B cell (primary cell): ENCODE measurements at regions of chr20 and their contacts with region 1.

Region 1: DNA sequence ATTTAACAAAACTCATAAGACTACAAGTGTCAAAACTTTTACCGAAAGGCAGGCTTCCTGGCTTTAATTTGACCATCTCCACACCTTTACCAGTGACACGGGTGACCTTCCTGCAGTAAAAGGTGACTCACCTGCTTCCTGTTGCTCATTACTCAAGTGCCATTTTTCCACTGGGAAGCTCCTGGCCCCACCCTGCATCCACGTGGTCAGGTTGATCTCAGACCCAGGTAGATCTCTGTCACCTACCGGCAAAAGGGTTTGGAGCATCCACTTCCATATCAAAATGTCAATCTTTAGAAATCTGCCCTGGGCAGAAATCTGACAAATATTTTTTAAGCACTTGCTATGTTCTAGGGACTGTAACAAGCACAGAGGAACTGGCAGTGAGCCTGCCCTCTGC is 31.9 kb upstream of the CDH4 start:
- DNase-seq: no peak
- ATAC-seq: no peak
- H3K4me3 ChIP-seq: no peak overlapping the region
- H3K4me3 Mint-ChIP-seq: no peak overlapping the region
- H3K27ac ChIP-seq: no peak overlapping the region
- H3K27ac Mint-ChIP-seq: no peak overlapping the region
- H3K4me1 ChIP-seq: no peaks in the 10 kb centered on the region
- H3K4me1 Mint-ChIP-seq: no peaks in the 10 kb centered on the region
- H3K27me3 ChIP-seq: no peaks in the 10 kb centered on the region
- H3K27me3 Mint-ChIP-seq: no peaks in the 10 kb centered on the region
- CTCF ChIP-seq: no peak

Region 2: GRCh38 chr20:59948828-59949720 is 1271.1 kb before region 1 on chr20:
- CTCF ChIA-PET with region 1: no interaction called
- POLR2A ChIA-PET with region 1: no interaction called
- intact Hi-C with region 1: loop called (anchors 5 kb)
- DNase-seq: peak; percentile 68
- ATAC-seq: peak; percentile 56
- H3K4me3 ChIP-seq: no peak overlapping the region
- H3K4me3 Mint-ChIP-seq: peak overlapping the region; percentile 38
- H3K27ac ChIP-seq: peak overlapping the region in 1 of 2 donors; percentile 39
- H3K27ac Mint-ChIP-seq: peak overlapping the region; percentile 33
- H3K4me1 ChIP-seq: peaks cover 4 to 10% of the 10 kb centered on the region in 2 donors
- H3K4me1 Mint-ChIP-seq: peaks cover 12% of the 10 kb centered on the region
- H3K27me3 ChIP-seq: no peaks in the 10 kb centered on the region
- H3K27me3 Mint-ChIP-seq: no peaks in the 10 kb centered on the region
- CTCF ChIP-seq: peak; percentile 86

Region 3: DNA sequence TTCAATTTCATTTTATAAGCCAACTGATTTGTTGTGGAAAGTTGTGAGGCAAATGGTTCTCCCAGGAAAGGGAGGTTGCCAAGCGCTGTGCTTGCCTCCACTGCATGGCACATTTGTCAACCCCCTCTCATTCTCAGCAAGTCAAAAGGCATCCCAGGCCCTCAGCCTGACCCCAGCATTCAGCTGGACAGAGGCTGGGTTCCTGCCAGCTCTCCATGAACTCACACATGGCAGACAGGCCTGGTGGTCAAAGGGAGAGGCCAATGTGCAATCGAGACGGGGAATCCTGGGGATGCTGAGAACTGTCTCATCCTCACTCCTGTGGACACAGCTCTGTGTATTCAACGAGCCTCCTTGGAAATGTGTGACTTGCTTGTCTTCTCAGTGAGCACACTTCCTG is 74.1 kb before region 1 on chr20:
- CTCF ChIA-PET with region 1: no interaction called
- POLR2A ChIA-PET with region 1: no interaction called
- intact Hi-C with region 1: no loop called
- DNase-seq: no peak
- ATAC-seq: no peak
- H3K4me3 ChIP-seq: no peak overlapping the region
- H3K4me3 Mint-ChIP-seq: no peak overlapping the region
- H3K27ac ChIP-seq: no peak overlapping the region
- H3K27ac Mint-ChIP-seq: no peak overlapping the region
- H3K4me1 ChIP-seq: no peaks in the 10 kb centered on the region
- H3K4me1 Mint-ChIP-seq: no peaks in the 10 kb centered on the region
- H3K27me3 ChIP-seq: no peaks in the 10 kb centered on the region
- H3K27me3 Mint-ChIP-seq: no peaks in the 10 kb centered on the region
- CTCF ChIP-seq: no peak

Region 4: DNA sequence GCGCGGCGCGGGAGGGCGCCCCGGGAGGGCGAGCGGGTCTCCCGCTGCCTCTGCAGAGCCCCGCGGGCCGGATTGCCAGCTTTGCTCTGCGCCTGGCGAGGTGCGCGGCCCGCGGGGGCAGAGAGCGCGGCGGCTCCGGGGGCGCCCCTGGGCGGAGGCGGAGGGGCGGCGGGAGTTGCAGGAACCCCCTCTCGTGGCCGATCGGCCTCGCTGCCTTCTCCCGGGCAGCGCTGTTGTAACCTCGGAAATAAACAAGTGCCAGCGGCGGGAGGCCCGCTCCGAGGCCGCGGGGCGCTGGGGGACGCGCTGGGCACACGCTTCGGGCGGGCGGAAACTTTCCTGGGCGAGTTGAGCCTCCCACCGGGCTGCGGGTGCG is 33.1 kb after region 1 on chr20:
- CTCF ChIA-PET with region 1: no interaction called
- POLR2A ChIA-PET with region 1: no interaction called
- intact Hi-C with region 1: no loop called
- DNase-seq: no peak
- ATAC-seq: no peak
- H3K4me3 ChIP-seq: no peak overlapping the region
- H3K4me3 Mint-ChIP-seq: no peak overlapping the region
- H3K27ac ChIP-seq: no peak overlapping the region
- H3K27ac Mint-ChIP-seq: no peak overlapping the region
- H3K4me1 ChIP-seq: no peaks in the 10 kb centered on the region
- H3K4me1 Mint-ChIP-seq: peaks cover 2% of the 10 kb centered on the region
- H3K27me3 ChIP-seq: peaks cover 0 to 16% (median 3%) of the 10 kb centered on the region in 4 experiments
- H3K27me3 Mint-ChIP-seq: peaks cover 52% of the 10 kb centered on the region
- CTCF ChIP-seq: no peak